Right ventricle myocardium inferior (tissue), 1 donor: ENCODE measurements at regions of chr3 and their contacts with region 1.

Region 1: DNA sequence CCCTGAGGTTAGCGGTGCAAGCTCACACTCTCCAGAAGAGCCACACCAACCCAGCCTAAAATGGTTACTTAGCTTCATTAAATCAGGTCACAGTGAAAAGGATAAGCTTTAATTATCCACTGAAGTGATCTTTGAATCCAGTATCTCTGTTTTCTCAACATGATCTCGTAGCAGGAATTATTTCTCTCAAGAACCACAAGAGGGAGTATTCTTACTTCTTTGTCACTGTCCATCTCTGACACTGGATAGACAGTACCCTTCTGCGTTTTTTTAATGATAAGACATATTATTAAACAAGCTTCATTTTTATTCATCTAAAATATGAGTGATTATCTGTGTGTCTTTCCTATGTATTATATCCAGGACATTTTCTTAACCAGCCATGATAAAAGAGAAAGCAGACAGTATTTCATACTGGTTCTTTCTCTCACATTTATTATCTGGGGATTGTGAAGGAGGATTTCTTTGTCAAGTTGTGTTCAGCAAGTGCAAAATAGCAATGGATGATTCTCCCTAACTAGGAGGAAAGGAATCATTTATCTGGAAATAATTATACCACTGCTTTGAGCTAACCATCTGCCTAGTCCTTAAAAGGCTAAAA is 105.4 kb upstream of the CCDC54 start:
- DNase-seq: no peak
- ATAC-seq: no peak

Region 2: DNA sequence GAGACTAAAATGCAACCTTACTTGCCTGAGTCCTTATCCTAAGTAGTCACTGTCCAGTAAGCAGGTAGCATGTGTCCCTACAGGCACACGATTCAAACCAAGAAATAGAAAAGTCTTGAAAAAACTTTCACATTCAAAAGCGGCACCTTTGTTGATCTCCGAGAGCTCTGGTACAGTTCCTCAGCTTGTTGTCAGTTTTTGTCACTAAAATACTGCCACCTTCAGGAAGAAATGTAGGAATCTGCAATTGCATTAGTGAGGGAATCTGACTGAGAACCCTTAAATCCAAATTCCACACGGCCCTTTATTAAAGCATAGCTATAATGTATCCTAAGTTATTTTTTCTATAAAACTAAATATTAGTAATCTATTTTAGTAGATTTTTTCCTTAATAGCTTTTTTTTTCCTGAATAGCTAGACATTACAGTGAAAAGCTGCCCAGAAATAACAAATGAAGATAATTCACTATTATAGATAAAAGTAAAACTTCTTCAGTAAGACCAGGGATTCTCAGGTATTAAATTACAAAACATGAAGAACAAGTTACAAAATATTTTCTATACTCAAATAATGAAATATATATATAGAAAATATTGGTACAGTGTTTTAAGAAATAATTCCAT is 149.4 kb after region 1 on chr3:
- intact Hi-C with region 1: loop called (anchors 2 kb)
- DNase-seq: no peak
- ATAC-seq: peak; percentile 73

Region 3: DNA sequence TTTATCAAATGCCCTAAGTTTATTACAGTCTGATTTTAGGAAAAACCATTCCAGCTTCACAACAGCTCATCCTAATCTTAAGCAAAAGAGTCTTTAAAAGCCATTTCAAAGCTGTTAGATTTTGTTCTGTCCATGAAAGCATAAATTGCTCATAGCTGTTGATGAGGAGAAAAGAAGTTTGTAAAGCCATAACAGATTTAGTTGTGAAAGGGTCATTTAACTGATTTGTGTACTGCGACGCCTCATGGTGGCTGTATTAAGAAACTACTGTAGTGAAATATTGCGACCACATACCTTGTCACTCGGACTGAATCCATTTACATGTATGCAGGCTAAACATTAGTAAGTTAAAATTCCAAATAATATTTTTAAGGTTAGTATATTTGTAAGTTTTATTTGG is 271.8 kb after region 1 on chr3:
- intact Hi-C with region 1: loop called (anchors 5 kb)
- DNase-seq: no peak
- ATAC-seq: no peak